MCF 10A (cell line): ENCODE measurements at regions of chr15 and their contacts with region 1.

Region 1: DNA sequence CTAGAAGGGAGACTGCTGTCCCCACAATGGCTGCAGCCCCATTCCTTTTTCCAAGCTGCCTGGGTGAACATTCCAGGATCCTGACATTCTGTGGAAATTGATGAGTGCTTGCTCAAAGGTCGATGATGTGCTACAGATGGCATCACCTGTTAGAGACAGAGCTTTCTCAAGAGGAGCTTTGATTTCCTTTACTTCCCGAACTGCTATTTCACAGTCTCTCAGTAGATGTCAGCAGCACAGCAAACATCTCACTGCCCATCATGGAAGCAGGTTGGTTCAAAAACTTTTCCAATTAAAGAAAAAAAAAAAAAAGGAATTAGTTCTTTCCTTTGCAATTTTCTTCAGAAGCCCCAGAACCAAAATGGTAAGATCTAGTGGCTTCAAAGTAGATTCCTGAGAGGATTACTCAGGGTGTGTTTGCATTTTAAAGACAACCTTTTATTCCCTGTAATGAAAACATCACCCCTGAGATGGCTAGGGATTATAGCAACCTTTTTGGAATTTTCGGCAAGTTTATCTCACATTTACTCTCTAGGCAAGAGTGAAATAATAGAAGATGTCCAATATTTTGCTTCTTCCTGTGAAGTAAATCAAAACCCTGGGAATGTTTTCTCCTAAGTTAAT is 44.8 kb downstream of the POLR2M start:
- DNase-seq: peak; percentile 51
- H3K4me3 Mint-ChIP-seq: no peak overlapping the region
- H3K27ac Mint-ChIP-seq: no peak overlapping the region
- H3K4me1 Mint-ChIP-seq: no peaks in the 10 kb centered on the region
- H3K27me3 Mint-ChIP-seq: no peaks in the 10 kb centered on the region
- CTCF ChIP-seq: peak; percentile 59

Region 2: DNA sequence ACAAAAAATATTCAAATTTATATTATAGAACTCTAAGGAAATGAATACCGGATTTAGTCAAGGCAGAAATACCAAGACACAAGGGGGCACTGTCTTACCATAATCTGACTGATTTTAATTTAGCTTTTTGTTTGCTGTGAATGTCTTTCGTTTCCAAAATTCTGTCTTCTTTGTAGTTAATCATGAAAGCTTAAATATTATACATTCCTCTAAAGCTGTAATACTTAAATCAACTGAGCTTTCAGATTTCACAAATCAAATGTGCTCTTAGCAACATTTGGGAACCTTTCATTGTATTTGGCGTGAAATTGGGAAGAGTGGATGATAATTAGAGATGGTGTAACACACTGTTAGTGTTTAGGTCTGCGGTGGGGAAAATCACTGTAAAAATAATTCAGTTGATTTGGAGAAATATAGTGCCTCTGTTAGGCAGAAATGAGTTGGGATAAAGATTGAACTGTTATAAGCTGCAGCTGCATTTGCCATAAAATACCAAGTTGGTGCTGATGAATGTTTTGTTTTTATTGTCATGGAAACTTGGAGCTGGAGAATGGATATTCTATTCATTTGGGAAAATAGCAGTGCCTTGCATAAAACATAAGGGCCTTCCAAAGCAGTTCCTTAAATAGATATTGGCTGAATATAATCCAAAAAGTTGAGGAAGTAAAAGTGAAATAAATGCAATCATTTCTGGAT is 604.6 kb before region 1 on chr15:
- CTCF ChIA-PET with region 1: no interaction called
- POLR2A ChIA-PET with region 1: no interaction called
- intact Hi-C with region 1: no loop called
- DNase-seq: peak; percentile 54
- H3K4me3 Mint-ChIP-seq: no peak overlapping the region
- H3K27ac Mint-ChIP-seq: no peak overlapping the region
- H3K4me1 Mint-ChIP-seq: peaks cover 27% of the 10 kb centered on the region
- H3K27me3 Mint-ChIP-seq: no peaks in the 10 kb centered on the region
- CTCF ChIP-seq: peak; percentile 69

Region 3: GRCh38 chr15:57570994-57571393 is 180.3 kb before region 1 on chr15:
- CTCF ChIA-PET with region 1: no interaction called
- POLR2A ChIA-PET with region 1: no interaction called
- intact Hi-C with region 1: no loop called
- DNase-seq: peak; percentile 89
- H3K4me3 Mint-ChIP-seq: no peak overlapping the region
- H3K27ac Mint-ChIP-seq: peak overlapping the region; percentile 89
- H3K4me1 Mint-ChIP-seq: peaks cover 27% of the 10 kb centered on the region
- H3K27me3 Mint-ChIP-seq: no peaks in the 10 kb centered on the region
- CTCF ChIP-seq: no peak

Region 4: GRCh38 chr15:57667171-57667849 is 84.0 kb before region 1 on chr15:
- CTCF ChIA-PET with region 1: interaction called, 9 read pairs
- POLR2A ChIA-PET with region 1: interaction called, 3 read pairs
- intact Hi-C with region 1: loop called (anchors 1 kb)
- DNase-seq: peak; percentile 73
- H3K4me3 Mint-ChIP-seq: peak overlapping the region; percentile 43
- H3K27ac Mint-ChIP-seq: no peak overlapping the region
- H3K4me1 Mint-ChIP-seq: peaks cover 19% of the 10 kb centered on the region
- H3K27me3 Mint-ChIP-seq: no peaks in the 10 kb centered on the region
- CTCF ChIP-seq: peak; percentile 50

Region 5: GRCh38 chr15:57772223-57772957 is 21.1 kb after region 1 on chr15:
- CTCF ChIA-PET with region 1: interaction called, 16 read pairs
- POLR2A ChIA-PET with region 1: no interaction called
- intact Hi-C with region 1: no loop called
- DNase-seq: peak; percentile 51
- H3K4me3 Mint-ChIP-seq: no peak overlapping the region
- H3K27ac Mint-ChIP-seq: no peak overlapping the region
- H3K4me1 Mint-ChIP-seq: peaks cover 7% of the 10 kb centered on the region
- H3K27me3 Mint-ChIP-seq: no peaks in the 10 kb centered on the region
- CTCF ChIP-seq: no peak

Region 6: GRCh38 chr15:57866149-57866736 is 115.0 kb after region 1 on chr15:
- CTCF ChIA-PET with region 1: interaction called, 138 read pairs
- POLR2A ChIA-PET with region 1: interaction called, 5 read pairs
- intact Hi-C with region 1: loop called (anchors 1 kb)
- DNase-seq: peak; percentile 74
- H3K4me3 Mint-ChIP-seq: no peak overlapping the region
- H3K27ac Mint-ChIP-seq: no peak overlapping the region
- H3K4me1 Mint-ChIP-seq: peaks cover 7% of the 10 kb centered on the region
- H3K27me3 Mint-ChIP-seq: no peaks in the 10 kb centered on the region
- CTCF ChIP-seq: peak; percentile 80

Region 7: DNA sequence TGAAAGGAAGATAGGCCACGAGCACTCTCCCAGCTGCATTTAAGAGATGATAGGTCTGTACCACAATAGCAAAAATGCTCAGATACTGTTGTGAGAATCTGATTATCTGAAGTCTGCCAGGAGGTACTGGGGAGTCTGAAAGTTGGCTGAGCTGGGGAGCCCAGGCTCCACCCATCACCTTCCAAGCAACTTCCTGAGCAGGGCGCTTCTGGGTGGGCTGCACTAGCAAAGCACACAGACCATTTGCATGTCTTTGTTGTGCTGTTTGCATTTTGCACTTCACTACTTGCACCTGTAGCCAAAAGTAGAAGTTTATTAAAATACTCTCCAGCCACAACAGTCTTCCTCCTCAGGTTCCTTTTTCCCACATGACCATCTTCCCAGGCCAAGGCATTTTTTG is 181.1 kb after region 1 on chr15:
- CTCF ChIA-PET with region 1: no interaction called
- POLR2A ChIA-PET with region 1: no interaction called
- intact Hi-C with region 1: no loop called
- DNase-seq: no peak
- H3K4me3 Mint-ChIP-seq: no peak overlapping the region
- H3K27ac Mint-ChIP-seq: no peak overlapping the region
- H3K4me1 Mint-ChIP-seq: no peaks in the 10 kb centered on the region
- H3K27me3 Mint-ChIP-seq: peaks cover 12% of the 10 kb centered on the region
- CTCF ChIP-seq: no peak

Region 8: DNA sequence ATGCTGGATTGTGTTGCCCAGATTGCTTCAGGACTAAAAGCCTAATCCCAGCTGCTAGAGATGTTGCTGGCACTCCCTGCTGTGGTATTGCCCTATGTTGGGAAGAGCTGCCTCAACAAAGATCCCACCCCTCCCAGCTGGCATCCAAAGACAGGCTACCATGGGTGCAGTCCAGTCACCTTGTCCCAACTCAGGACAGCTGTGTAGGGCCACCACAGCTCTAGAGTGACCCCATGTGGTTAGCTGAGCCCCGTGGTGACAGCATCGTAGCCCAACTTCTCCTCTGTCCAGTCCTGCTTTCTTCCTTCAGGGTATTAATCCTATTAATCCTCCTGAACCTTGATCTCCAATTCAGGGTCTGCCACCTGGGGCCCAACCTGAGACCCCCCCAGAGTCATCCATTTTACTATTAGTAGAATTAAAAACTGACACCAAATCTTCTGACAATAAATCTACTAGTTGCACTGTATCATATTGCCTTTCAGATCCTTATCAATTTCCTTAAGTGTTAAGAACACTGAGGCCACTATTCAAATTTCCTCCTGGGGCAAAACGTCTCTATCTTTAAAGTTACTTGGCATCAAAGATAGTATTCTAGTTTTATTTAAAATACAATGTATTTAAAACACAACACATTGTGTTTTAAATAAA is 470.4 kb after region 1 on chr15:
- CTCF ChIA-PET with region 1: no interaction called
- POLR2A ChIA-PET with region 1: no interaction called
- intact Hi-C with region 1: loop called (anchors 1 kb)
- DNase-seq: peak; percentile 62
- H3K4me3 Mint-ChIP-seq: no peak overlapping the region
- H3K27ac Mint-ChIP-seq: no peak overlapping the region
- H3K4me1 Mint-ChIP-seq: no peaks in the 10 kb centered on the region
- H3K27me3 Mint-ChIP-seq: no peaks in the 10 kb centered on the region
- CTCF ChIP-seq: peak; percentile 50